A673 (cell line): ENCODE measurements at regions of chr18 and their contacts with region 1.

Region 1: DNA sequence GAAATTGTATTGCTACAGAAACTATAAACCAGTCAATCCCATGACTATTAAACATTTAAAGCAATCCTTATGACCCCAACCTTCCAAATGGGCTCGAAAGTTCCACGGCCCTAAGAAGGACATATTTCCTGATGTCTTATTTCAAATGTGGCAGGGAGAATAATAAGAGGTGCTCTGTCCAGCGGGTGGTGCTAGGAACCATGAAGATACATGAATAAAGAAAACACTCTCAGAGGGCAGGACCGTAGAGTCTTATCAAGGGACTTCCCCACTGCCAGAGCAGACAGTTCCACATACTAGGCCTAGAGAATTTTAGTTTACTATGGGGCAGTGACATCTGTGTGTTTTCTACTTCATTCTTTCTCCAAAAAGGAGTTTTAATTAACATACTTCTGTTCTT is 187.1 kb upstream of the PIK3C3 start:
- DNase-seq: peak; percentile 41
- H3K4me3 ChIP-seq: no peak overlapping the region
- H3K27ac ChIP-seq: no peak overlapping the region
- H3K4me1 ChIP-seq: no peaks in the 10 kb centered on the region
- H3K27me3 ChIP-seq: peaks cover 5% of the 10 kb centered on the region
- CTCF ChIP-seq: peak; percentile 33; the same call in 1 of the 2 replicates

Region 2: DNA sequence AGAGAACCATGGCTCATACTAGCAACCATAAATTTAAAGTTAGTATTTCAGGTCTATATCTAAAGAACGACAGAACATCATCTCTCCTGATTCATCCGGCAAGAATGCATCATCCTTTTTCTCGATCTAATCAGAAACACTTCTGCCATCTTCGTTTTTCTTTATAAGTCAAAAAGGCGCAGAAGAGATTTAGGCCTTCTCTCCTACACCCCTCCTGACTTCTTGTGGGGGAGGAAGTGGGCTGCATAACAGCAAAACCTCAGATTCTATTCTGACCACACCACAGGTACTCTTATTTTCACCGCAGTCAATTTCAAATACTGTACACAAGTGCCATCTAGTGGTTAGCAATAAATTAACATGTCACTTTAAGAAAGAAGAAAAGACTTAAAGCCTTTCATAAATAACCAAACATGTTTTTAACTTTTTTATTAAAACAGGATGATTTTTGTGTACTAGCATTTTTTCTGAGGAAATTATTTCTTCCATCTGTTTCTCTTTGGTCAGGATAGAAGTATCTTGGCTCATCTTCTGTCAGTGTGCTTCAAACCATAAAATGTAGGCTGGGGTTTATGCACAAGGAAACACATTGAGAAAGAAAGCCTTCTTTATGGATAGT is 138.7 kb after region 1 on chr18:
- CTCF ChIA-PET with region 1: no interaction called
- POLR2A ChIA-PET with region 1: no interaction called
- intact Hi-C with region 1: loop called (anchors 5 kb)
- DNase-seq: peak; percentile 55
- H3K4me3 ChIP-seq: no peak overlapping the region
- H3K27ac ChIP-seq: no peak overlapping the region
- H3K4me1 ChIP-seq: no peaks in the 10 kb centered on the region
- H3K27me3 ChIP-seq: no peaks in the 10 kb centered on the region
- CTCF ChIP-seq: peak; percentile 78